HCT116 (cell line): ENCODE measurements at regions of chr4 and their contacts with region 1.

Region 1: DNA sequence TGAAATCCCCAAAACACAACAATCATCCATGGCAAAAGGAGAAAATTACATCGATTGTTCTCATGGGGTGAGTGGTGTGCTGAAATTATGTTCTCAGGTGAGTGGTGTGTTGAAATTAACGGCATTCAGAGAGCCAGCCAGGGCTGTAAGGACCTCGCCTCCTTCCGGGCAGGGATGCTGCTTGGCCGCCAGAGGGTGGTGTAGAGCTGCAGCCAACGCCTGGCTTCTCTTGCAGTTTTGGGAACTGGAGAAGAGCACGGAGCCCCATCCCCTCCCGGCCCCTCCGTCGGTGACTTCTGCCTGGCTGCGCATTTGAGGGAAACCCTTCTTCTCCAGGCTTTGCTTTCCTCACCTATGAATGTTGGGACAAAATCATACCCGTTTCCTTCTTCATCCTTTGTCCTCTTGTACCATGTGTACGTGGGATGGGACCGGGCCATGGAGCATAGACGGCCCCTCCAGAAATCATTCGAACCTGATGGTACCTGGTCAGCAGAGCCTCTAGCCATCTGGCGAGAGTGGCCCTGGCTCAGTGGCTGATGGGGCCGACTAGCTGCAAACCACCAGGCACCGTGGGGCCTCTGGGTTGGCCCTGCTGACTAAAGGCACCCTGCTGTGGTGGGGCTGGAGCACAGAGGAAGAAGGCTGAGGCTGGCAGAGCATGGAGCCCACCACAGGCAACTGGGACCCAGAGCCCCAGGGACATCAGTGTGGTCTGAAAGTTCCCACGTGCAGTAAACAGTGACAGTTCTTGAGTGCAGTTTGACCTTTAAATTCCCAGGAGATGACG is 28.4 kb downstream of the TRMT44 start:
- DNase-seq: peak; percentile 27
- ATAC-seq: peak; percentile 91
- H3K4me3 ChIP-seq: no peak overlapping the region
- H3K27ac ChIP-seq: no peak overlapping the region
- H3K4me1 ChIP-seq: no peaks in the 10 kb centered on the region
- H3K27me3 ChIP-seq: no peaks in the 10 kb centered on the region
- CTCF ChIP-seq: peak; percentile 91 to 96 (median 95)
- POLR2A ChIP-seq: no peak
- RAD21 ChIP-seq: peak; percentile 94

Region 2: DNA sequence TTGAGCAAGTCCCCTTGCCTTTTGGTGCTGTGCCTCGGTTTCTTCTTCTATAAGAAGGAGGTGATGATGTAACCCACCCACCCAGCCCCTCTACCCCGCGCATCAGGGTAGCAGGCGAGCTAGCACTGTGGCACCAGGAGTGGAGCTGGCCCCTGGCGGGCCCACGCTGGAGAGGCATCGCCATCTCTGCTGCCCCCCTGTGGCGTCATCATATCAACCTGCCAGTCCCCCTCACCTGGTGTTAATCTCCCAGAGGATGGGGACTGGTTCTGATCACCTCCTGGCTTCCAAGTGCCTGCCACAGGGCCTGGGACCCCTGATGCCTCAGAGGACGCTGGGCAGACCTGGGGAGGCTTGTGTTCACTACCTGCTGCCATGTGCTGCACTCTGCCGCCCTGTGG is 1282.9 kb before region 1 on chr4:
- CTCF ChIA-PET with region 1: no interaction called
- POLR2A ChIA-PET with region 1: no interaction called
- RAD21 ChIA-PET with region 1: no interaction called
- intact Hi-C with region 1: no loop called
- DNase-seq: no peak
- ATAC-seq: peak; percentile 82
- H3K4me3 ChIP-seq: no peak overlapping the region
- H3K27ac ChIP-seq: no peak overlapping the region
- H3K4me1 ChIP-seq: no peaks in the 10 kb centered on the region
- H3K27me3 ChIP-seq: peaks cover 11% of the 10 kb centered on the region; the same call in 1 of the 2 replicates
- CTCF ChIP-seq: peak; percentile 27 to 40 (median 37); a peak in 4 of 6 replicates
- POLR2A ChIP-seq: no peak
- RAD21 ChIP-seq: peak; percentile 45

Region 3: DNA sequence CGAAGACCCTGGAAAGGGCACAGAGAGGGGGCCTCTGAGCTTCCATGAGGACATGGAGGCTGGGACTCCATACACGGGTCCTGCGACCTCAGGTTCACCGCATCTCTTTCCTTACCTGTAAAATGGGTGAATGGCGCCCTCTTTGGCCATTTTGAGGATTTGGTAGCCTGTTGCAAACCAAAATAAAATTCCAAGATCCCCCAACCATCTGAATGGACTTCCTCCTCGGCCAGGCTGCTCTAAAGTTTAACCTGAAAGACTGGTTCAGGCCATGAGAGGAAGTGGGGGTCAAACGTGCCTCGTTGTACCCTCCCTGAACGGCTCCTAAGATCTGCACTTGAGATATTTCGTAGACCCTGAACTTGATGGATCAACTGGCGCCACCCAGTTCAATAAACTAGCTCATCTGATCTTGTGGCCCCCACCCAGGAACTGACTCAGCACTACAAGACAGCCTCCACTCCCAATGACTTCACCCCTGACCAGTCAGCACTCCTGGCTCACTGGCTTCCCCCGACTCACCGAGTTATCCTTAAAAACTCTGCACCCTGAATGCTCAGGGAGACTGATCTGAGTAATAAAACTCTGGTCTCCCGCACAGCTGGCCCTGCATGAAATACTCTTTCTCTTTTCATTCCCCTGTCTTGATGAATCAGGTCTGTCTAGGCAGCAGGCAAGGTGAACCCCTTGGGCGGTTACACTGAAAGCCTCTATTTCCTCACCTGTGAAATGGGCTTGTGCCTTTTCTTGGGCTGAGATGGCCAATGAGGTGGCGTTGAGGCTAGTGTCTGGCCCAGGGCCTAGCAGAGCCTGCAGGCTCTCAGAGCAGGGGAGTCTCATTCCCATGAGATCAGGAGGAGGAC is 78.4 kb after region 1 on chr4:
- CTCF ChIA-PET with region 1: interaction called, 35 read pairs
- POLR2A ChIA-PET with region 1: no interaction called
- RAD21 ChIA-PET with region 1: interaction called, 3 to 6 read pairs
- intact Hi-C with region 1: loop called (anchors 1 kb)
- DNase-seq: peak; percentile 56
- ATAC-seq: peak; percentile 81
- H3K4me3 ChIP-seq: no peak overlapping the region
- H3K27ac ChIP-seq: no peak overlapping the region
- H3K4me1 ChIP-seq: peaks cover 0 to 21% of the 10 kb centered on the region in 2 experiments; a peak in 3 of 4 replicates
- H3K27me3 ChIP-seq: 0 out of 2 replicates have a peak, but pooled peaks cover 2% of the 10 kb centered on the region
- CTCF ChIP-seq: peak in 2 of 3 experiments; percentile 70 to 77; a peak in 4 of 6 replicates
- POLR2A ChIP-seq: no peak
- RAD21 ChIP-seq: no peak

Region 4: GRCh38 chr4:8586671-8587455 is 117.9 kb after region 1 on chr4:
- CTCF ChIA-PET with region 1: interaction called, 14 read pairs
- POLR2A ChIA-PET with region 1: no interaction called
- RAD21 ChIA-PET with region 1: interaction called in 1 of 2 experiments, 7 read pairs
- intact Hi-C with region 1: no loop called
- DNase-seq: no peak
- ATAC-seq: peak; percentile 87
- H3K4me3 ChIP-seq: no peak overlapping the region
- H3K27ac ChIP-seq: no peak overlapping the region
- H3K4me1 ChIP-seq: no peaks in the 10 kb centered on the region
- H3K27me3 ChIP-seq: peaks cover 12% of the 10 kb centered on the region; the same call in 1 of the 2 replicates
- CTCF ChIP-seq: peak; percentile 35 to 63 (median 49); a peak in 4 of 6 replicates
- POLR2A ChIP-seq: no peak
- RAD21 ChIP-seq: peak; percentile 60

Region 5: GRCh38 chr4:8594097-8595038 is 125.4 kb after region 1 on chr4:
- CTCF ChIA-PET with region 1: interaction called, 5 read pairs
- POLR2A ChIA-PET with region 1: no interaction called
- RAD21 ChIA-PET with region 1: no interaction called
- intact Hi-C with region 1: loop called (anchors 1 kb)
- DNase-seq: peak; percentile 64
- ATAC-seq: peak; percentile 83
- H3K4me3 ChIP-seq: no peak overlapping the region
- H3K27ac ChIP-seq: no peak overlapping the region
- H3K4me1 ChIP-seq: peaks cover 3 to 10% of the 10 kb centered on the region in 2 experiments; a peak in 3 of 4 replicates
- H3K27me3 ChIP-seq: 0 out of 2 replicates have a peak, but pooled peaks cover 5% of the 10 kb centered on the region
- CTCF ChIP-seq: peak; percentile 67 to 82 (median 78)
- POLR2A ChIP-seq: no peak
- RAD21 ChIP-seq: peak; percentile 92

Region 6: GRCh38 chr4:8917868-8918783 is 449.2 kb after region 1 on chr4:
- CTCF ChIA-PET with region 1: interaction called, 4 read pairs
- POLR2A ChIA-PET with region 1: no interaction called
- RAD21 ChIA-PET with region 1: no interaction called
- intact Hi-C with region 1: loop called (anchors 10 kb)
- DNase-seq: peak; percentile 38
- ATAC-seq: peak; percentile 97
- H3K4me3 ChIP-seq: no peak overlapping the region; a peak in 1 of 4 replicates
- H3K27ac ChIP-seq: no peak overlapping the region
- H3K4me1 ChIP-seq: 0 out of 4 replicates have a peak, but pooled peaks cover 0 to 2% of the 10 kb centered on the region in 2 experiments
- H3K27me3 ChIP-seq: no peaks in the 10 kb centered on the region; the same call in 1 of the 2 replicates
- CTCF ChIP-seq: peak; percentile 83 to 95 (median 85)
- POLR2A ChIP-seq: no peak
- RAD21 ChIP-seq: peak; percentile 95